ENCODE measurements at regions of chr3 and their contacts with region 1.

Region 1: DNA sequence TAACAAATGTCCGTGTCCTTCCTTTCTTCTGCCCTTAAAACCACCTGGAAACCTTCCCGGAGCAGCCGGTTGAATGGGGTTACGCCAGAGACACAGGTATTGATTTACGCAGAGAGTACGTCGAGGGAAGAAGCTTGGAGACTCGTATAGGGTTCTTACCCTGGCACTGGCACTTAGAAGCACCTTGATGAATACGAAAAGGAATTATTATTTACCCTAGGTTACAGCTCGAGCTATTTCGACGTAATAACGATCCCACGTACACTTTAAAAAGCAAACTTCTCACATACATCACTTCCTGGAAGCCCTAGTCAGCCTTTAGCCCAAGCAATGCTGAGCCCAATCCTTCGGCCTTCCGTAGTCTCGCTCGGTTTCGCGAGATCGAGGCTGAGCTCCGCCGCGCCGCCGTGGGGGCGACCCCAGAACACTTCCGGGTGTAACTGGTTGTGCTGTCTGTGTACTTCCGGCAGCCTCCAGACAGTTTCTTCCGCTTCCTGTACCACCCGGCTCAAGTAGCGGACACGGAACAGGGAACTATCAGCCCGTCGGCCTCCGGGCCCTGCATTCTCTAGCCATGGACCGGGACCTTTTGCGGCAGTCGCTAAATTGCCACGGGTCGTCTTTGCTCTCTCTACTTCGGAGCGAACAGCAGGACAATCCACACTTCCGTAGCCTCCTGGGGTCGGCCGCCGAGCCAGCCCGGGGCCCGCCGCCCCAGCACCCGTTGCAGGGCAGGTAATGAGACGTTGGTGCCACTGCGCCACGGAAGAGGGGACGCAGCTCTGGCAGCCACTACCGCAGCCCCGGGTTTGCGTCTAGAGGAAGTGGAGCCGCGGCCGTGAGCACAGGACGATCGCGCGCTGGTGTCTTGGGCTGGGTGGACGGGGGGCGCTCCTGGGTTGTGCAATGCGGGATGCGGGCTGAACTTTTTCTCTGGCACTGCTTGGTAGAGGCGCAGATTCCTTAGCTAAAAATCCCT is at the start of gene TTC14:
- DNase-seq: peak; percentile 95
- H3K4me3 Mint-ChIP-seq: peak within 1 kb of the TSS; percentile 86
- H3K27ac Mint-ChIP-seq: peak within 1 kb of the TSS; percentile 87
- H3K4me1 Mint-ChIP-seq: peaks cover 39% of the 10 kb centered on the region
- H3K27me3 Mint-ChIP-seq: peaks cover 11% of the 10 kb centered on the region
- total RNA-seq, gene TTC14: 66.2 to 68.7 TPM

Region 2: GRCh38 chr3:180478695-180479094 is 123.3 kb before region 1 on chr3:
- CTCF ChIA-PET with region 1: no interaction called
- POLR2A ChIA-PET with region 1: no interaction called
- DNase-seq: no peak
- H3K4me3 Mint-ChIP-seq: no peak overlapping the region
- H3K27ac Mint-ChIP-seq: no peak overlapping the region
- H3K4me1 Mint-ChIP-seq: no peaks in the 10 kb centered on the region
- H3K27me3 Mint-ChIP-seq: no peaks in the 10 kb centered on the region

Region 3: GRCh38 chr3:180615954-180616353 is 14.0 kb after region 1 on chr3:
- CTCF ChIA-PET with region 1: interaction called, 3 read pairs
- POLR2A ChIA-PET with region 1: interaction called, 27 read pairs
- DNase-seq: no peak
- H3K4me3 Mint-ChIP-seq: no peak overlapping the region
- H3K27ac Mint-ChIP-seq: no peak overlapping the region
- H3K4me1 Mint-ChIP-seq: no peaks in the 10 kb centered on the region
- H3K27me3 Mint-ChIP-seq: no peaks in the 10 kb centered on the region

Measured in activated CD4-positive, alpha-beta memory T cell treated with anti-CD3 and anti-CD28 coated beads, Interleukin-2, amount 10 ng/mL, durations not matched to agents 7 days and 5 days (primary cell).